Activated CD8-positive, alpha-beta memory T cell treated with anti-CD3 and anti-CD28 coated beads, Interleukin-2, amount 10 ng/mL, durations not matched to agents 7 days and 5 days (primary cell): ENCODE measurements at regions of chr7 and their contacts with region 1.

Region 1: DNA sequence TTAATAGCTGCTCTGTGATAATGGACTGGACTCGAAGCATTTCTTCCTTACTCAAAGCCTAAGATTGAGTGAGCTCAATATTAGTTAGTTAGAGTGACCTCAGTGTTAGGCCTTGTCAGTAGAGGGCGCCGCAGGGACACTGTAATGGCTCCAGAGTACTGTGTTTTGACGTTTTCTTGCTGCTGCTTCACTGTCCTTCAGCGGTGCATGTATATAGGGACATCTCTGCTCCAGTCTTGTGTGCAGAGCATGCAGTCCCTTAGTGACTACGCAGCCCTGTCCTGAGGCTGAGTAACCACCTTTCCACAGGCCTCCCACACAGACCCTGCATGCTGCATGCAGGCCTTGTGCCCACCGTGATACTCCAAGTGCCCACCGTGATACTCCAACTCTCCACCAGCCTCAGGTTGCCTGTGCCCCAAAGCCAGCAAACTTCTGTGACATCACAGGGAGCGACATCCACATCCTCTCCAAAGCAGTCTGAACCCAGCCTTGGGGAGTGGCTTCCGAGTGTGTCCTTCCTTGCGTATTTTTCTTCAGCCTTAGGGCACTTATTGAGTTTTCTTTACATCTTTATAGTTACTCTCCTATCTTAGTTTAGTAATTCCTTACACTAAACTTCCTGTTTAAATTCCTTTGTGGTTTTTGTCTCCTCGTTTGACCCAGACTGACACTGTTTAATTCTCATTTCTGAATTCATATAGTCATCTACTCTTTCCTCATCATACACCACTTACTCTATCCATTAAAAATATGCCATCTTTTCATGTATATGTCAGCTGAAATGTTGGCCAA is 118.2 kb downstream of the JAZF1 start:
- DNase-seq: peak; percentile 69
- ATAC-seq: peak; percentile 80
- H3K4me3 Mint-ChIP-seq: no peak overlapping the region
- H3K27ac Mint-ChIP-seq: no peak overlapping the region
- H3K4me1 Mint-ChIP-seq: peaks cover 3% of the 10 kb centered on the region
- H3K27me3 Mint-ChIP-seq: peaks cover 12% of the 10 kb centered on the region

Region 2: DNA sequence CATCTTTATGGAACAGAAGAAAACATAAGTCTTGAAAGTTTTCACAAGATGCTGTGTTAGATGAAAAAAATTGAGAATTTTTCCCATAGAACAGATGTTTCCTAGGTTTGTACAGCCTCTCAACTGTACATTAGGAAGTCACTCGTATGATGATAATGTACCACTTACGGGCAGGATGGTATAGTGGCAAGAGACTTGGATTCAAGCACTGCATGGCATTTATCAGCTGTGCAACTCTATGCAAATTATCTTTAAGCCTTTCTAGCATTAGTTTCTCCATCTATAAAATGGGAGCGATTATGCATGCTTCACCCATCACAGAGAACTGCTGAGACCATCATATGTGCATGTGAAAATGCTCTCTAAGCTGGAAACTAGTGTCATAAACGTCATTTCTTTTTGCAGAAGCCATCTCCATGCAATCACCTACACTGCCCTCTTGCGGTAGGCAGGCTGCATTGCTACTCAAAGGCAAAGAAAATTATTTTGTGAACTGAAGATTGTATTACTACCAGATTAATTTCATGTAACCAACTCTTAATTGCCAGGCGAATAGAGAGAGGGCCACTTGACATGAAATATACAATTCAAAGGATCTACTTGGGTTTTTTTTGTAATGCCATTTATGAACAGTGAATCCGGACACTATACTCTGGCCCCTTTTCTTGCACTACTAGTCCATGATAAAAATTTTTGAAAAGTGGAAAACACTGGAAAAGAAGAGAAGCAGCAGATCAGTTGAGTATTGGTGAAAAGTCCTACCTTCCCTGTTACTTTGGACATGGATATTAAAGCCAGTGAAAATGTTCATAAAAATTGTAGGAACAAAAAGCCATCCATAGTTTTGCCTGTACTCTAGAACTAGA is 15.9 kb after region 1 on chr7:
- CTCF ChIA-PET with region 1: interaction called, 15 read pairs
- DNase-seq: peak; percentile 60
- ATAC-seq: peak; percentile 45
- H3K4me3 Mint-ChIP-seq: no peak overlapping the region
- H3K27ac Mint-ChIP-seq: no peak overlapping the region
- H3K4me1 Mint-ChIP-seq: peaks cover 5% of the 10 kb centered on the region
- H3K27me3 Mint-ChIP-seq: no peaks in the 10 kb centered on the region